HepG2 (cell line): ENCODE measurements at regions of chr17 and their contacts with region 1.

Region 1: DNA sequence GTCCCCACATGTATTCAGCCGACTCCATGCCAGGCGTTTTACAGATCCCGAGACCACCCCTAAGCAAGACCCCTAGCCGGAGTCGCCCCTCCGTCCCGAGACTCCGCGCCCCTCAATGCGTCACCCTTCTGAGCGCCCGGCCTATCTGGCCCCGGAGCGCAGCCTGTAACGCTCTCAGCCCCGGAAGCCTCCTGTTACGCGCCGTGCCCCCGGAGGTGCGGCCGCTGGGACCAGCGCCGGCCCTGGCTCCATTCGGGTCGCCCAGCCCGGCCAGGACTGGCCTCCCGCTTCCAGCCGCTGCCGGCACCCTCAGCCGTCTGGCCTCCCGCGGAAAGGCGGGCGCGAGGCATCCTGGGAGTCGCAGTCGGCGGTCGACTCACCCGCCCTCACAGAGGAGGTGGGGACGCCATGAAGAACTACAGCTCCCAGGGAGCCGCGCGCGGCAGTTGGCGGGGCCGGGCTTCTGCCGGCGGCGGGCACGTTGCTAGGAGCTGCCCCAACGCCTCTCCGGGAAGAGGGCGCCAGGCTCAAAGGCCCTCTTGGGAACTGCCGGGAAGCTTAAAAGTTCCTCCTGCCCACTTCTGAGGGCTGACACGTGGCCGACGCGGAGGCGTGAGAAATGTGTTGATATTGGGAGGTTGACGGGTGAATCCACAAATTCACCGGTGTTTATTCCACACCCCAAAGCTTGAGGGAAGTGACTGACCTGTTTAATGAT is at the start of gene FBF1:
- DNase-seq: peak; percentile 93
- ATAC-seq: peak; percentile 96
- H3K4me3 ChIP-seq: peak within 1 kb of the TSS; percentile 73 to 83 (median 79)
- H3K27ac ChIP-seq: peak within 1 kb of the TSS; percentile 49
- H3K4me1 ChIP-seq: peaks cover 27% of the 10 kb centered on the region
- H3K27me3 ChIP-seq: no peaks in the 10 kb centered on the region; a peak in 1 of 5 replicates
- CTCF ChIP-seq: peak; percentile 58
- EP300 ChIP-seq: peak in 1 of 2 experiments; percentile 31; a peak in 1 of 4 replicates
- POLR2A ChIP-seq: peak; percentile 89 to 94
- RAD21 ChIP-seq: peak; percentile 70
- total RNA-seq, gene FBF1: 3.5 and 8.1 TPM in 2 replicates

Region 2: DNA sequence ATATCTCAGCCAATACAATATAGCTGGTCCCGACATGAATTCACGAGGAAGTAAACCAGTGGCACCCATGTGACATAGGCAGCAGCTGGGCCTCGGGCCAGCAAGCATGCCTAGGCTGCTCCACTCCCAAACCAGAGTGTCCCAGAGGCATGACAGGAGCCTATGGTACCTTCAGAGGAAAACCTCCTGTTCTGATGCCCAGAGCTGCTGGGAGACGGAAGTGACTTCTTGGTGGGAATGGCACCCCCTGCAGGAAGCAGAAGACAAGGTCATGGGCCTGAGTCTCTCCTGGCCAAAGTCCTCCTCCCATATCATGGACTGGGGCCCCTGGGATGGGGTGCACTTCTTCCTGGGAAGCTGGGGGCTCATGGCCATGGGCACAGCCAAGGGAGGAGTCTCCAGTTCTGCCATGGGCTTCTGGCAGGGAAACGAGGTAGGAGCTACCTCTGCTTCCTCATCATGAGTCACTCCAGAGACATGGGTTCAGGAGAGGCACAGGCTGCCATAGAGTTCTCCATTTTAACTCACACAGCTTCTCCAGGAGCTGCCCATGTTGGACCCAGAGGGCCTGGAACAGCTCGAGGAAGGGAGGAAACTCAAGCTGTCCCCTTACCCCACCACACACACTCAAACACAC is 13.5 kb before region 1 on chr17:
- CTCF ChIA-PET with region 1: no interaction called
- POLR2A ChIA-PET with region 1: interaction called, 12 read pairs
- in situ Hi-C with region 1: no loop called
- intact Hi-C with region 1: no loop called
- DNase-seq: peak; percentile 52
- ATAC-seq: peak; percentile 63
- H3K4me3 ChIP-seq: no peak overlapping the region
- H3K27ac ChIP-seq: no peak overlapping the region
- H3K4me1 ChIP-seq: peaks cover 35% of the 10 kb centered on the region
- H3K27me3 ChIP-seq: no peaks in the 10 kb centered on the region
- CTCF ChIP-seq: peak; percentile 73
- EP300 ChIP-seq: no peak
- POLR2A ChIP-seq: no peak
- RAD21 ChIP-seq: peak; percentile 51